Kidney (tissue), 22 donors: ENCODE measurements at regions of chr9 and their contacts with region 1.

Region 1: DNA sequence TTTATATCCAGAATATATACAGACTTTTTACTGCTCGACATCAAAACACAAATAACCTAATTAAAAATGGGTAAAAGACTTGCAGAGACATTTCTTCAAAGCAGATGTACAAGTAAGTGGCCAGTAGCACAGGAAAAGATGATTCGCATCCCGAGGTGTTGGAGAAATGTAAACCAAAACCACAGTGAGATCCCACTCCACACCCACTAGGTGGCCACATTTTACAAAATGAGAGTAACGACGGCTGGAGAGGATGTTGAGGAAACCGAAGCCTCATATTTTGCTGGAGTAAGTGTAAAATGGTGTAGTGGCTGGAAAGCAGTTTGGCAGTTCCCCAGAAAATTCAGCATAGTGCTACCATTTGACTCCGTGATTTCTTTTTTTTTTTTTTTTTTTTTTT is 21.2 kb upstream of the GBGT1 start:
- DNase-seq: peak in 3 of 5 donors; percentile 69 to 93 (median 87)
- H3K4me3 ChIP-seq: no peak overlapping the region
- H3K27ac ChIP-seq: no peak overlapping the region
- H3K4me1 ChIP-seq: no peaks in the 10 kb centered on the region
- H3K27me3 ChIP-seq: no peaks in the 10 kb centered on the region
- CTCF ChIP-seq: peak; percentile 72

Region 2: GRCh38 chr9:133335878-133336811 is 151.2 kb after region 1 on chr9 and contains the start of gene SURF6:
- intact Hi-C with region 1: loop called (anchors 10 kb)
- DNase-seq: peak; percentile 91 to 97 (median 94)
- H3K4me3 ChIP-seq: peak within 1 kb of the TSS; percentile 70 to 88 (median 78)
- H3K27ac ChIP-seq: peak within 1 kb of the TSS; percentile 47 to 67
- H3K4me1 ChIP-seq: peaks cover 0 to 22% (median 0%) of the 10 kb centered on the region in 3 donors
- H3K27me3 ChIP-seq: no peaks in the 10 kb centered on the region
- CTCF ChIP-seq: peak; percentile 21
- total RNA-seq, gene SURF6: 17.3 TPM

Region 3: GRCh38 chr9:133485361-133486260 is 300.6 kb after region 1 on chr9:
- intact Hi-C with region 1: loop called (anchors 10 kb)
- DNase-seq: peak in 1 of 5 donors; percentile 76
- H3K4me3 ChIP-seq: no peak overlapping the region
- H3K27ac ChIP-seq: no peak overlapping the region
- H3K4me1 ChIP-seq: no peaks in the 10 kb centered on the region
- H3K27me3 ChIP-seq: no peaks in the 10 kb centered on the region
- CTCF ChIP-seq: no peak

Region 4: DNA sequence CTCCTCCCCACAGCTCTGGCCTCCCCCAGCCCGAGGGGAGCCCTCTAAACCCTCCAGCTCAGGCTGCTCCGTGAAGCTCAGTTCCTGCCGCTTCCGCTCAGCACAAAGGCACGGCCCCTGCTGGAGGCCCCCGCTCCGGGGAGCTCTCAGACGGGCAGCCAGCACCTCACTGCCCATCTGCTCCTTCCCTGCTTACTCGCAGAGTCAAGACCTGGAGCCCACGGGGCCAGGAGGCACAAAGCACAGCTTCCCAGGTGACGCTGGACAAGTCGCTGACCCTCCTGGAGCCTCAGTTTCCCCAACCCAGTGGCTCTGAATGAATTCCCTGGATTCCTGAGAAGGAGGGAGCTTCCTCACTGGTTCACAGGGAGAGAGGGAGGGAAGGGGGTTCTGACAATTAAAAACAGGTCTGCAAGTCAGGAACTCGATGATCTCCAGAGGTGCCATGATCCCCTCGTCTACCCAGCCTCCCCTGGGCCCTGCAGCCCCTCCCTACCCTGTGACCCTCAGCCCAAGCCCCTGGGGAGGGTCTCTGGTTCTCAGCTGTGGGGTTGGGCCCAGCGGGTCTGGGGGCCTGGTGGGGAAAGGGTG is 771.0 kb after region 1 on chr9:
- intact Hi-C with region 1: no loop called
- DNase-seq: peak; percentile 81 to 88 (median 84)
- H3K4me3 ChIP-seq: no peak overlapping the region
- H3K27ac ChIP-seq: peak overlapping the region; percentile 74 to 82
- H3K4me1 ChIP-seq: peaks cover 0 to 54% (median 18%) of the 10 kb centered on the region in 3 donors
- H3K27me3 ChIP-seq: no peaks in the 10 kb centered on the region
- CTCF ChIP-seq: no peak